Transverse colon (tissue), 4 donors: ENCODE measurements at regions of chr19 and their contacts with region 1.

Region 1: DNA sequence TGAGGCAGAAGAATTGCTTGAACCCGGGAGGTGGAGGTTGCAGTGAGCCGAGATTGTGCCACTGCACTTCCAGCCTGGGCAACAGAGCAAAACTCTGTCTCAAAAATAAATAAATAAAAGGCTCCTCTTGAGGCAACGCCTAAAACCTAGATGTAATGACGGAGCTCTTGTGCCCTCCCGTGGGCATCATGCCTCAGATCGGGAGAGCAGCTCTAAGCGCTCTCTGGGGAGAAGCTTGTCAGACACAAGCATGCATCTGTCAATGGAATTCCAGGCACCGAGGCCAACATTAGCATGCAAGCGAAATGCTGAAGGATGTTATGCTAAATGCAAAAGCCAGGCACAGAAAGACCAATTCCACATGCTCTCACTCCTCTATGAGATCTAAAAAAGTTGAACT is 45.6 kb upstream of the MRI1 start:
- DNase-seq: peak; percentile 53
- H3K4me3 ChIP-seq: no peak overlapping the region
- H3K27ac ChIP-seq: no peak overlapping the region
- H3K4me1 ChIP-seq: no peaks in the 10 kb centered on the region
- H3K27me3 ChIP-seq: peaks cover 4% of the 10 kb centered on the region
- CTCF ChIP-seq: peak in 4 of 5 experiments; percentile 22 to 52 (median 39)
- EP300 ChIP-seq: no peak
- POLR2A ChIP-seq: no peak

Region 2: GRCh38 chr19:13277104-13277809 is 441.5 kb before region 1 on chr19:
- in situ Hi-C with region 1: loop called in 2 of 4 experiments (anchors 25 kb)
- intact Hi-C with region 1: no loop called
- DNase-seq: peak; percentile 58
- H3K4me3 ChIP-seq: no peak overlapping the region
- H3K27ac ChIP-seq: no peak overlapping the region
- H3K4me1 ChIP-seq: peaks cover 0 to 4% (median 1%) of the 10 kb centered on the region in 4 donors
- H3K27me3 ChIP-seq: peaks cover 7% of the 10 kb centered on the region
- CTCF ChIP-seq: peak; percentile 63 to 81 (median 72)
- EP300 ChIP-seq: no peak
- POLR2A ChIP-seq: no peak

Region 3: DNA sequence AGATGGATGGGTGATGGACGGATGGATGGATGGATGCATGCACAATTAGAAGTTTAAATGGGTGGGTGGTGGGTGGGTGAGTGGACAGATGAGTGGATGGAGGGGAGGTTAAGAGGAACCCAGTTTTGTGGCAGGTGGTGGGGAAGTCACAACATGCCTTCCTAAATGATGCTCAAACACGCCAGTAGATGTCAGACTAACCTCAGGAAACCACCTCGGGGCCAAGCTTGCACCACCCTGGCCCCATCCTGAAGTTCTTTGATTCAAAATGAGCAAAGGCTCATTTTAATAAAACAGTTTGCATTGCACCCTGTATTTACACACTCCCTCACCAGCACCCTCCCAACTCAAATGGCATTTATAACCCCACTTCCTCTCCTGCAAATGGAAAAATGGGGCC is 121.1 kb before region 1 on chr19:
- in situ Hi-C with region 1: loop called in 3 of 4 experiments (anchors 10 to 25 kb)
- intact Hi-C with region 1: loop called (anchors 5 kb)
- DNase-seq: peak; percentile 41
- H3K4me3 ChIP-seq: no peak overlapping the region
- H3K27ac ChIP-seq: no peak overlapping the region
- H3K4me1 ChIP-seq: no peaks in the 10 kb centered on the region
- H3K27me3 ChIP-seq: peaks cover 14% of the 10 kb centered on the region
- CTCF ChIP-seq: peak; percentile 59 to 67 (median 61)
- EP300 ChIP-seq: no peak
- POLR2A ChIP-seq: no peak

Region 4: GRCh38 chr19:13604902-13605586 is 113.7 kb before region 1 on chr19:
- in situ Hi-C with region 1: loop called in 3 of 4 experiments (anchors 5 to 25 kb)
- intact Hi-C with region 1: no loop called
- DNase-seq: no peak
- H3K4me3 ChIP-seq: no peak overlapping the region
- H3K27ac ChIP-seq: no peak overlapping the region
- H3K4me1 ChIP-seq: peaks cover 0 to 2% (median 0%) of the 10 kb centered on the region in 4 donors
- H3K27me3 ChIP-seq: peaks cover 4% of the 10 kb centered on the region
- CTCF ChIP-seq: no peak
- EP300 ChIP-seq: no peak
- POLR2A ChIP-seq: no peak

Region 5: DNA sequence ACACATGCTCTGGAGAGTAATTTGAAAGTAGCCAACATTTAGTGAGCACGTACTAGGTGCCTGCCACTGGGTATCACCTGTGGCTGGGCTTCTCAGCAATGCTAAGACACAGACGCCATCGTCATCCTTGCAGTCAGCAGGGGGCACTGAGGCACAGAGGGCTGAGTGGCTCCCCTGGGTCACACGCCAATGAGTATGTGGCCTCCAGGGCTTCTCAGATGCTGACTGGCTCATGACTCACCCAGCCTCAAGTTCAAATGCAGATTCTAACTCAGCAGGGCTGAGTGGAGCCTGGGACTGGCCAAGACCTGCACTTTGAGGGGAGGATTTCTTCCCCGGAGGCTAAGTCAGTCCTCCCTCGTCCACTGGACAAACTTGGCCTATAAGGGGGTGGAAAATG is 97.3 kb before region 1 on chr19:
- in situ Hi-C with region 1: loop called in 1 of 4 experiments (anchors 25 kb)
- intact Hi-C with region 1: no loop called
- DNase-seq: no peak
- H3K4me3 ChIP-seq: no peak overlapping the region
- H3K27ac ChIP-seq: no peak overlapping the region
- H3K4me1 ChIP-seq: no peaks in the 10 kb centered on the region
- H3K27me3 ChIP-seq: peaks cover 44% of the 10 kb centered on the region
- CTCF ChIP-seq: no peak
- EP300 ChIP-seq: no peak
- POLR2A ChIP-seq: no peak

Region 6: GRCh38 chr19:13633109-13633508 is 85.6 kb before region 1 on chr19:
- in situ Hi-C with region 1: no loop called
- intact Hi-C with region 1: no loop called
- DNase-seq: peak; percentile 85
- H3K4me3 ChIP-seq: no peak overlapping the region
- H3K27ac ChIP-seq: peak overlapping the region; percentile 78 to 84 (median 84)
- H3K4me1 ChIP-seq: peaks cover 0 to 19% (median 8%) of the 10 kb centered on the region in 4 donors
- H3K27me3 ChIP-seq: peaks cover 7% of the 10 kb centered on the region
- CTCF ChIP-seq: no peak
- EP300 ChIP-seq: no peak
- POLR2A ChIP-seq: no peak

Region 7: DNA sequence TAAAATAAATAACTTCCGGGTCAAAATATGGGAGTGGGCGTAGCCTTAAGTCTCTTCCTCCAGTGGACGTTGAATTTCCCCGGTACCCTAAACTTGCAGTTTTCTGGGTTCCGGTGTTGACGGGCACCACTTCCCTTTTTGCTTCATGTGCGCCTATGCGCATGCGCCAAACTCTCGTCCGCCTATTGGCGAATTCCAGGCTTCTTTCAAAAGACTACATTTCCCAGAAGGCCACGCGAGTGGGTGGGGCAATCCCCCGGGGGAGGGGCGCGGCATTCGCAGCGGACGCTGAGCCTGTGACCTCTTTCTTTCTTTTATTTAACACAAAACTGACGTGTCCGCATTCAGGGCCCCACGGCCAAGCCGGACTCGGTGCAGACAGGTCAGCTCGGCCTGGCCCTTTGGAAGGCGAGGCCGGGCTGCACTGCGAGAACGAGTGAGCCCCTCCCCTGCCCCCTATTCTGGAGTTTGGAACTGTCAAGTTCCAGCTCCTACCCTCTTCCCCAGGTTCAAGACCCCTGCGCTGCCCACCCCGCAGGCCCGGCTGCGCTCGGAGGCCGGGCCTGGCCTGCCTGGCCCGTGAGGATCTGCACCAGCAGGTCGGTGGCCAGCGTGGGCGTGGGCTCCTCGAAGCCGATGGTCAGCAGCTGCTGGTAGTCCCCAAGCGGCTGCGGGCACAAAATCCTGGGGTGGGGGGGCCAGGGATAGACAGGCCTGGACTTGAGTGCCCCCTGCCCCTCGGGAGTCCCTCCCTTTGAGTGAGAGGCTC is 362.8 kb after region 1 on chr19:
- in situ Hi-C with region 1: no loop called
- intact Hi-C with region 1: no loop called
- DNase-seq: peak; percentile 99
- H3K4me3 ChIP-seq: peak overlapping the region; percentile 58 to 77 (median 69)
- H3K27ac ChIP-seq: peak overlapping the region; percentile 88 to 95 (median 94)
- H3K4me1 ChIP-seq: peaks cover 10 to 42% (median 20%) of the 10 kb centered on the region in 4 donors
- H3K27me3 ChIP-seq: no peaks in the 10 kb centered on the region
- CTCF ChIP-seq: no peak
- EP300 ChIP-seq: no peak
- POLR2A ChIP-seq: peak; percentile 75